ENCODE measurements at regions of chr2 and their contacts with region 1.

Region 1: DNA sequence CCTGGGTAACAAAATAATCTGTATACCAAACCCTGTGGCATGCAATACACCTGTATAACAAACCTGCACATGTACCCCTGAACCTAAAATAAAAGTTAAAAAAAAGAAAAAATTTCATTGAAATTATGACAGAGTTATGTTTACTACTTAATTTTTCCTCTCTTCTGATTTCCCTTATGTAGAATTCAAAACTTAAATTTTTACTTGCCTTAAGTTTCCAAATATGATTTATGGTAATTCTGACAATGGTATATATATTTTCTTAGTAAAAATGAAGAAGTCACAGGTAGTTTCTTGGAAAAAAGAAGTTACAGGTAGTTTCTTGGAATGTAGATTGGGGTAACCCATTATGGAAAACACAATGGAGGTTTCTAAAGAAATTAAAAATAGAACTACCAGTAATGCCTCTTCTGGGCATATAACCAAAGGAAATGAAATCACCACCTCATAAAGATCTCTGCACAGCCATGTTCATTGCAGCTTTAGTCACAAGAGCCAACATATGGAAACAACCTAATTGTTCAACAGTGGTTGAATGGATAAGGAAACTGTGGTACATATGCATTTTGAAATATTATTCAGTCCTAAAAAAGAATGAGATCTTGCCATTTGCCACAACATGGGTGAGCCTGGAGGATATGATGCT is 164.9 kb downstream of the BABAM2 start:
- DNase-seq: no peak

Region 2: DNA sequence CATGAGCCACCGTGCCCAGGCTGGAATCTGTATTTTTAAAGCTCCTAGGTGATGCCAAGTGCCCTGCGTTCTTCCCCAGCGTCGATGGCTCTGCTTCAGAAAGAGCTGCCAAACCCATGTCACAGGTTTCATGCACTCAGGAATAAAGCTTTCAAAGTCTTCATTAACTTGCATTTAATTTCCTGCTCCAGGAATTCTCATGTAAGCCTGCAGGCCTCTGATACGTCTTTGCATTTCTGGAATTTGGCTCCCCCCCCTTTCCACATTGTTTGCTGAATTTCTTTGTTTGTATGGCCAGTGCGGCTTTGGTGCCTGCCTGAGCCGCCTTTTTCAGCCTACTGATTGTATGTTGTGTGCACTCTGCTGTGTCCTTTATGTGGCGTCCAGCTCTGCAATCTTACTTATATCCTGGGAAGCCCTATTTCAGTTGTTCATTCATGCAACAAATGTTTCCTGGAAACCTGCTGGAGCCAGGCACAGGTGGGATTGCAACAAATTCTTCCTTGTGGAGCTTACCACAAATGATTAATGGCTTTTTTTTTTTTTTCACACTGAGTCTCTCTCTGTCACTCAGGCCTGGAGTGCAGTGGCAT is 1559.6 kb before region 1 on chr2:
- intact Hi-C with region 1: loop called in 1 of 2 experiments (anchors 10 kb)
- DNase-seq: no peak

Region 3: GRCh38 chr2:27992787-27993401 is 62.6 kb before region 1 on chr2:
- intact Hi-C with region 1: no loop called
- DNase-seq: no peak

Region 4: DNA sequence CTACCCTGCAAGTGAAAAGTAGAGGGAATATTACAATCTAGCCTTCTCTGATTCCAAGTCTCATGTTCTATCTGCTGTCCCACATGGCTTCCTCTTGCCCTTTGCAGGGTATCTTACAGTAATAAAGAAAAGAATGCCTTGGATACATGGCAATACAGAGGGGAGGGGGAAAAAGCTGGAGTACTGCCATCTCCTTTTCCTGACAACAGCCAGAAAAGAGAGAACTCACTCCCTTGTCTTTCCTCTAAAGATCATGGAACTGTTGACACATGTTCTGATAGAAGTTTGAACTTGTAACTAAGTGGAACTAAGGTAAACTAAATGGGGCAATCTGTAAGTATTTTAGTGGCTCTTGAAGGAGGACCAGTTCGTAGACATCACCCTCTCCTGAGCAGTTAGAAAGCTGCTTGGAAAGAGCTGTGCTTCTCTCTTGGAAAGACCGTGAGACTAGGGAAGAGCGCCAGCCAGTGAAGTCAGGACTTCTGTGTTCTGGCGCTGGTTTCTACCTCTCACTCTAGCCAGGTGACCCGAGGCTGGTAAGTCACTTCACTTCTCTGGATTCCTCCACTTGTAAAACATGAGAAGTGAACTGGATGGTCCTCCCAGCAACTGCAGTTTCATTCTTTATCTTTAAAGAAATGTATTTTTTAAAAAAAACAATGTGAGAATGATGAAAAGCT is 94.9 kb after region 1 on chr2:
- intact Hi-C with region 1: no loop called
- DNase-seq: no peak

Measured in posterior vena cava (tissue), 2 donors.